CD8-positive, alpha-beta T cell (primary cell): ENCODE measurements at regions of chr6 and their contacts with region 1.

Region 1: DNA sequence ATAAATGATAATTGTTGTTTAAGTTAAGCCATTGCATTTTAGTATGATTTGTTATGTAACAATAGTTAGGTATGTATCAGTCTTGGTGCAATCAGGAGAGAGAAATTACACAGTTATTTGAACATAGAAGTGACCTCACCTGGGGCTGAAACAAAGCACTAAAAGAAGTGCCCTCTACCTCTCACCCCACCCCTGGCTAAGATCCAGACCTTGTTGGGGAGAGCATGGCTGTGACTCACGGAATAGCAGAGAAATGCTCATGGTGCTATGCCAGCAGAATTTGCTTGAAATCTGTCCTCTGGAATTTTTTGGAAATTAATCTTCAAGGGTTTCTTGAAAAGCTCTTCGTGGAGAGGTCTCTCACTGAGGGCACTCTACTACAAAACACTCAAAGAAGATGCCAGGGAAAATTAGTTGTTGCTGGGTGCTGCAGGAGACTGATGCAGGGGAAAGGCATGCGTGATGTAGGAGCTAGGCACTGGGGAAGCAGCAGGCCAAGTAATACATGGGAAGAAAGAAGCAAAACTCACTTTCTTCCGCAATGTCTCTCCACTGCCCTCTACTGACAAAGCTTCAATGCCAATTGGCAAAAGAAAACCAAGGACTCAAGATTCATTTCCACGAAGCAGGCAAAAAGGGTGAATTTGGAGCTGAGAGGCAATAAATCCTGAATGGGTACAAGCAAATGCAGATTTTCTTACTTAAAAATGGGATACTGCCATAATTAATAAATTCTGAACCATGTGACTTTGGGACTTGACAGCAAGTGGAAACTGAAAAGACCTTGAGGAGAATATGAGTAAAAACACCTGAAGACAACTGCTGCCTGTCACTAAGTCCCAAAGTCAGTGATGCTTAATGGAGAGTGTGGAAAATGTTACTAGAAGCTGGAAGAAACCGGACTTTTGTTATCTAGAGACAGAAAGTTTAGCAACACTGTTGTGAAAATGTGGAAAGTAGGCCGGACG is 136.3 kb upstream of the ZNF184 start:
- DNase-seq: peak in 2 of 9 experiments; percentile 44 to 58
- ATAC-seq: no peak
- H3K4me3 ChIP-seq: no peak overlapping the region
- H3K4me3 Mint-ChIP-seq: no peak overlapping the region
- H3K27ac ChIP-seq: no peak overlapping the region
- H3K27ac Mint-ChIP-seq: no peak overlapping the region
- H3K4me1 ChIP-seq: no peaks in the 10 kb centered on the region
- H3K4me1 Mint-ChIP-seq: peaks cover 11% of the 10 kb centered on the region
- H3K27me3 ChIP-seq: peaks cover 12 to 18% of the 10 kb centered on the region in 2 experiments
- H3K27me3 Mint-ChIP-seq: peaks cover 47% of the 10 kb centered on the region
- CTCF ChIP-seq: peak; percentile 48

Region 2: GRCh38 chr6:27188885-27189418 is 420.2 kb before region 1 on chr6:
- CTCF ChIA-PET with region 1: no interaction called
- POLR2A ChIA-PET with region 1: no interaction called
- intact Hi-C with region 1: loop called in 1 of 2 experiments (anchors 1 kb)
- DNase-seq: peak in 8 of 9 experiments; percentile 24 to 86 (median 50)
- ATAC-seq: peak; percentile 77
- H3K4me3 ChIP-seq: peak overlapping the region; percentile 58 to 62
- H3K4me3 Mint-ChIP-seq: peak overlapping the region; percentile 87
- H3K27ac ChIP-seq: peak overlapping the region in 1 of 2 experiments; percentile 33
- H3K27ac Mint-ChIP-seq: no peak overlapping the region
- H3K4me1 ChIP-seq: peaks cover 4% of the 10 kb centered on the region
- H3K4me1 Mint-ChIP-seq: peaks cover 10% of the 10 kb centered on the region
- H3K27me3 ChIP-seq: no peaks in the 10 kb centered on the region
- H3K27me3 Mint-ChIP-seq: no peaks in the 10 kb centered on the region
- CTCF ChIP-seq: peak; percentile 66